ENCODE measurements at regions of chr20 and their contacts with region 1.

Region 1: GRCh38 chr20:36861875-36862801 is 13.8 kb upstream of the TLDC2 start:
- DNase-seq: peak; percentile 53 to 91
- H3K4me3 ChIP-seq: peak overlapping the region; percentile 79 to 92
- H3K27ac ChIP-seq: peak overlapping the region; percentile 91
- H3K4me1 ChIP-seq: peaks cover 4 to 16% of the 10 kb centered on the region in 2 donors
- H3K27me3 ChIP-seq: no peaks in the 10 kb centered on the region
- CTCF ChIP-seq: no peak

Region 2: GRCh38 chr20:36773597-36774390 is 88.3 kb before region 1 on chr20 and contains the start of gene DSN1:
- intact Hi-C with region 1: loop called (anchors 1 kb)
- DNase-seq: peak; percentile 92 to 99
- H3K4me3 ChIP-seq: peak within 1 kb of the TSS; percentile 72 to 85
- H3K27ac ChIP-seq: peak within 1 kb of the TSS; percentile 97 to 98
- H3K4me1 ChIP-seq: peaks cover 3 to 19% of the 10 kb centered on the region in 2 donors
- H3K27me3 ChIP-seq: no peaks in the 10 kb centered on the region
- CTCF ChIP-seq: peak in 1 of 3 experiments; percentile 60
- total RNA-seq, gene DSN1: 26.9 TPM

Region 3: GRCh38 chr20:36821964-36822437 is 40.1 kb before region 1 on chr20:
- intact Hi-C with region 1: loop called (anchors 2 kb)
- DNase-seq: no peak
- H3K4me3 ChIP-seq: no peak overlapping the region
- H3K27ac ChIP-seq: peak overlapping the region; percentile 70 to 79
- H3K4me1 ChIP-seq: peaks cover 26 to 52% of the 10 kb centered on the region in 2 donors
- H3K27me3 ChIP-seq: no peaks in the 10 kb centered on the region
- CTCF ChIP-seq: no peak

Region 4: DNA sequence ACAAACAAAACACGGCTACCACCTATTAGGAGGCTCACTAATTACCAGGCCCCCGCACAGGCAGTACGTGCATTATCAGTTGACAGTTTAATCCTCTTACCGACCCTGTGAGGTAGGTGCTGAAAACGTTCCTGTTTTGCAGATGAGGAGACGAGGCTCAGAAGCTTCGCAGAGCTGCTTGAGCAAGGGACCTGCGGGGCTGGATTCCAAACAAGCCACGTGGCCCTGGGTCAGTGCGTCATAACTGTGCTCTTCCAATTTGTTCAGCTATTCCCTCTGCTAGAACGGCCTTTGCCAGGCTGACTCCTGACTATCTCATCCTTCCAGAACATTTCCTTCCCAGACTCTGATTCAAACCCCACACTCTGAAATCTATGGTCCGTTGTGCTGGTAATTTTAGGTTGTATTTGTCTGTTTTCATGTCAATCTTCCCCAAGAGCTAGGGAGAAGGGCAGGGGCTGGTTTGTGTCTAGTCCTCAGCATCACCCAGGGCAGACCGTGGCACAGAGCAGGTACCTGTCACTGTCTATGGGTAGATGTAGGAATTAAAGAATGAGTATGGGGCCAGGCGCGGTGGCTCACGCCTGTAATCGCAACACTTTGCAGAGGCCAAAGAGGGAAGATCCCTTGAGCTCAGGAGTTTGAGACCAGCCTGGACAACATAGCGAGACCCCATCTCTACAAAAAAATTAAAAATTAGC is 15.0 kb before region 1 on chr20:
- intact Hi-C with region 1: loop called (anchors 1 kb)
- DNase-seq: peak; percentile 44 to 92
- H3K4me3 ChIP-seq: no peak overlapping the region
- H3K27ac ChIP-seq: peak overlapping the region; percentile 93 to 98
- H3K4me1 ChIP-seq: peaks cover 29 to 54% of the 10 kb centered on the region in 2 donors
- H3K27me3 ChIP-seq: no peaks in the 10 kb centered on the region
- CTCF ChIP-seq: no peak